ENCODE measurements at regions of chr21 and their contacts with region 1.

Region 1: DNA sequence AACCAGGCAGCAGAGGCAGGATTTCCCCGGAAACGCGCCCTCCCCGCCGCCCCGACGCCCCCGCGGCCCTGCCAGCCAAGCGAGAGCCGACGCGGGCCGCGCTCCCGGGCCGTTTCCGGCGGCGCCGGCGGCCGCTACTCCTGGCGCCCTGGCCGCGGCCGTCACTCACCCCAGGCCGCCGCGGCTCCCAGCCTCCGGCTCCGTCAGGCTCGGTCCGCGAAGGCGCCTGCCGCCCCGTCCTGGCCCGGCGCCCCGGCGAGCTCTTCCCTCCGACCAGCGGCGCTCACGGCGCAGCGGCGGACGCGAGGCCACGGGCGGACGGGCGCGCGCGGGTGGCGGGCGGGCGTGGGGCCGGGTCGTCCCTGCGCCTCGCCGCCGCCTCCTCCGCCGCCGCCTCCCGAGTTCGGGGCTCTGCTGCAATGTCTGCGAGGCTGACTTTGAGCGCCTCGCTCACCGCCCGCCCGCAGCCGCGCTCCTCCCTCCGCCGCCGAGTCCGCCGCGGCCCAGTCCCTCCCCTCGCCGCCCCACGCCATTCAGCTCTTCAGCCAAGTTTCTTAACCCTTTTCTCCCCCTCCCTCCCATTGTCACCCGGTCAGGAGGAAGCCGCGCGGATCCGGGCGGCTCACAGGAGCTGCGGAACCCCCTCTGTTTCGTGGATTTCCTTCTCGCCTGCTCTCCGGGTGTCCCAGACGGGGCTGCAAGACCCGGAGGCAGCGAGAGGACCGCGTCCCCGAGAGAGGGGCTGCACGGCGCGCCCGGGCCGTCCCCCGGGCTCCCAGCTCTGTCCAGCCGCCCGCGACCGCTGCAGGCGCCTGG is at the start of gene NRIP1:
- DNase-seq: peak; percentile 79 to 86 (median 85)
- H3K4me3 ChIP-seq: peak within 1 kb of the TSS; percentile 66 to 72
- H3K4me3 Mint-ChIP-seq: peak within 1 kb of the TSS; percentile 92 to 97 (median 96)
- H3K27ac ChIP-seq: peak within 1 kb of the TSS; percentile 68
- H3K27ac Mint-ChIP-seq: peak within 1 kb of the TSS; percentile 95 to 99 (median 97)
- H3K4me1 ChIP-seq: peaks cover 27% of the 10 kb centered on the region
- H3K4me1 Mint-ChIP-seq: peaks cover 22 to 53% (median 38%) of the 10 kb centered on the region in 4 donors
- H3K27me3 ChIP-seq: no peaks in the 10 kb centered on the region
- H3K27me3 Mint-ChIP-seq: peaks cover 0 to 18% of the 10 kb centered on the region in 2 donors
- total RNA-seq, gene NRIP1: 22.8 to 24.5 TPM

Region 2: GRCh38 chr21:14403681-14404318 is 661.0 kb before region 1 on chr21:
- CTCF ChIA-PET with region 1: no interaction called
- POLR2A ChIA-PET with region 1: no interaction called
- intact Hi-C with region 1: loop called (anchors 5 kb)
- DNase-seq: peak in 4 of 5 donors; percentile 32 to 45 (median 38)
- H3K4me3 ChIP-seq: no peak overlapping the region
- H3K4me3 Mint-ChIP-seq: no peak overlapping the region
- H3K27ac ChIP-seq: no peak overlapping the region
- H3K27ac Mint-ChIP-seq: no peak overlapping the region
- H3K4me1 ChIP-seq: no peaks in the 10 kb centered on the region
- H3K4me1 Mint-ChIP-seq: peaks cover 0 to 1% (median 0%) of the 10 kb centered on the region in 4 donors
- H3K27me3 ChIP-seq: no peaks in the 10 kb centered on the region
- H3K27me3 Mint-ChIP-seq: peaks cover 0 to 3% of the 10 kb centered on the region in 2 donors

Region 3: DNA sequence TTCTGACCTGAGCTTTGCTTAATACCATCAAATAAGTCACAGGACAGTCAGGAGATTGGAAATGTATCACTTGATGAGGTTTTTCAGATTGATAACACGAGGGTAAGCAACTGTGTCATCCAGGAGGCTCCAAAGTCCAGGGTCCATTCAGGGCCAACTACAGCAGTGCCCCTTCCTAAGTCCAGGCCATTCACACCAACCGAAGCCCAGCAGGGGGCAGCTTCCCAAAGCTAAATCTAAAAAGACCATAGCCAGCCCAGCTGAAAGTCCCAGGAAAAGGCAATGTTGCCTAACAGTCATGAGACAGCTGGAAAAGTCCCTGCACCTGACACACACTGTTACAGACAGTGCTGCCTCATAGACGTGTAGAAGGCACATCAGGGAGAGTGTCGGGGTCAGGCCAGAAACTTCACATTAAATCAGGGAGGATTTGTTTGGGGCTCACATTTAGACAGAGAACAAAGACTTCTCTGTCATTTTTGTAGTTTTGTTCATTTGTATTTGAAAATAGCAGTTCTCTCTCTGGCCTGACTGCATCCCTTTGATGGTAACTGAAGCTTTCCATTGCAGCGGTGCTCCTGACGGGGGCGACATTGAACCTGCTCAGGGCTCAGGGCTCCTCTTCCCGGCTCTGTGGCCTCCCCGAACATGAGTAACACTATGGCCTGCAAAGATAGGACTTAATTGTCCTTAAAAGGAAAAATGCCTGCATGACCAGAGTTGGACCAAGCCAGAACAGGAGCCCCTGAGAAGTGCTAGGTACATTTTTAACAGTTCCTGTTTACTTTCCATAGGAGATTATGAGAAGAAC is 200.4 kb before region 1 on chr21:
- CTCF ChIA-PET with region 1: no interaction called
- POLR2A ChIA-PET with region 1: no interaction called
- intact Hi-C with region 1: no loop called
- DNase-seq: peak in 2 of 5 donors; percentile 3 to 4
- H3K4me3 ChIP-seq: no peak overlapping the region
- H3K4me3 Mint-ChIP-seq: no peak overlapping the region
- H3K27ac ChIP-seq: no peak overlapping the region
- H3K27ac Mint-ChIP-seq: no peak overlapping the region
- H3K4me1 ChIP-seq: no peaks in the 10 kb centered on the region
- H3K4me1 Mint-ChIP-seq: peaks cover 0 to 1% (median 0%) of the 10 kb centered on the region in 4 donors
- H3K27me3 ChIP-seq: no peaks in the 10 kb centered on the region
- H3K27me3 Mint-ChIP-seq: no peaks in the 10 kb centered on the region

Region 4: GRCh38 chr21:15005391-15005790 is 59.4 kb before region 1 on chr21:
- CTCF ChIA-PET with region 1: no interaction called
- POLR2A ChIA-PET with region 1: interaction called, 8 read pairs
- intact Hi-C with region 1: loop called (anchors 5 kb)
- DNase-seq: peak in 3 of 5 donors; percentile 5 to 11 (median 10)
- H3K4me3 ChIP-seq: no peak overlapping the region
- H3K4me3 Mint-ChIP-seq: peak overlapping the region; percentile 29 to 75 (median 65)
- H3K27ac ChIP-seq: no peak overlapping the region
- H3K27ac Mint-ChIP-seq: peak overlapping the region in 3 of 7 donors; percentile 42 to 80 (median 44)
- H3K4me1 ChIP-seq: peaks cover 13% of the 10 kb centered on the region
- H3K4me1 Mint-ChIP-seq: peaks cover 14 to 47% (median 36%) of the 10 kb centered on the region in 4 donors
- H3K27me3 ChIP-seq: no peaks in the 10 kb centered on the region
- H3K27me3 Mint-ChIP-seq: no peaks in the 10 kb centered on the region

Region 5: DNA sequence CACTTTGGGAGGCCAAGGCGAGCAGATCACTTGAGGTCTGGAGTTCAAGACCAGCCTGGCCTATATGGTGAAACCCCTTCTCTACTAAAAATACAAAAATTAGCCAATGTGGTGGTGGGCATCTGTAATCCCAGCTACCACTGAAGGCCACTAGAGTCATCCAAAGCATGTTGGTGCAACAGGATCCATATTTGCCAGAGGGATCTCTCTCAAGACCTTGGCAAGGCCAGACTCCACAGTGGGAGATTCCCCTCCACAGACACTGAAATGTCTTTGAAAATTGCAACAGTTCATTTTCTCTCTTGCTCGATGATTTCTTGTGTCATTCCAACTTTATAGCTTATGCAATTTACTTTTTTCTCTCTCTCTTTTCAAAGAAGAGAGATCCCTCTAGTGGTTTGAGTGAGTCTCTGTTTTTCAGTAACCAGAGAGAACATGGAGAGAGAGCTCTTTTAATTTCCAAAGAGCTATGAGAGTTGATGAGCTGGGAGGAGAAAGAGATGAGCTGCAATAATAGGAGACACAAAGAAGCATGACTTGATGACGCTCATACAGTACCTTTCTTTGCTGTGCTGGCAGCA is 488.2 kb after region 1 on chr21:
- CTCF ChIA-PET with region 1: interaction called, 4 read pairs
- POLR2A ChIA-PET with region 1: no interaction called
- intact Hi-C with region 1: loop called (anchors 1 kb)
- DNase-seq: peak in 4 of 5 donors; percentile 21 to 38 (median 34)
- H3K4me3 ChIP-seq: no peak overlapping the region
- H3K4me3 Mint-ChIP-seq: peak overlapping the region in 1 of 8 donors; percentile 21
- H3K27ac ChIP-seq: no peak overlapping the region
- H3K27ac Mint-ChIP-seq: no peak overlapping the region
- H3K4me1 ChIP-seq: peaks cover 11% of the 10 kb centered on the region
- H3K4me1 Mint-ChIP-seq: peaks cover 9 to 10% (median 10%) of the 10 kb centered on the region in 4 donors
- H3K27me3 ChIP-seq: no peaks in the 10 kb centered on the region
- H3K27me3 Mint-ChIP-seq: peaks cover 0 to 4% of the 10 kb centered on the region in 2 donors

Region 6: DNA sequence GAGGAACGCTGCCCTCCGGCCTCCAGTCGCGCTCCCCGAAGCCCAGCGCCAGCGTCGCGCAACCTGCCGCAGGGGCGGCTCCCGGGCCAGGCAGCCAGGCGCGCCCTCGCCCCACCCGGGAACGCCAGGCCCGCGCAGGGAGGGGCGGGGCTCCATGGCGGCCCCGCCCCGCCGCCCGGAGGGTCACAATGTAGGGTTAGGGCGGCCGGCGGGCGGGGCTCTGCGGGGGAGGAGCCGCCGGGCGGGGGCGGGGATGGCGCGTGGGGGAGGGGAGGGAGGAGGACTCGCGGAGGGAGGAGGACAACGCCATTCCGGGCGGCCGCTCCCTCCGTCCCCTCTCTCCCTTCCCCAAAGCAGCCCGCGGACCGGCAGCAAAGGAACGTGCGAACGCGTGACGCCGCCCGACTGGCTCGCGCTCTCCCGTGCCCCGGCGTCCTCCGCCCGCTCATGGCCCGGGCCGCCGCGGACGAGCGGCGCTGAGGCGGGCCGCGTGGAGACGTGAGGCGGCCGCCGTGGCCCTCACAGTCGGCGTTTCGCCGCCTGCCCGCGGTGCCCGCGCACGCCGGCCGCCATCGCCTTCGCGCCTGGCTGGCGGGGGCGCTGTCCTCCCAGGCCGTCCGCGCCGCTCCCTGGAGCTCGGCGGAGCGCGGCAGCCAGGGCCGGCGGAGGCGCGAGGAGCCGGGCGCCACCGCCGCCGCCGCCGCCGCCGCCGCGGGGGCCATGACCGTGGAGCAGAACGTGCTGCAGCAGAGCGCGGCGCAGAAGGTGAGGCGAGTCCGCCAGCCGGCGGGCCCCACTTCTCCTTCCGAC is 665.1 kb after region 1 on chr21 and contains the start of gene USP25:
- CTCF ChIA-PET with region 1: no interaction called
- POLR2A ChIA-PET with region 1: interaction called, 4 read pairs
- intact Hi-C with region 1: loop called (anchors 2 kb)
- DNase-seq: peak; percentile 83 to 86 (median 84)
- H3K4me3 ChIP-seq: peak within 1 kb of the TSS; percentile 47 to 65
- H3K4me3 Mint-ChIP-seq: peak within 1 kb of the TSS; percentile 82 to 98 (median 94)
- H3K27ac ChIP-seq: peak within 1 kb of the TSS; percentile 65
- H3K27ac Mint-ChIP-seq: peak within 1 kb of the TSS; percentile 83 to 96 (median 95)
- H3K4me1 ChIP-seq: peaks cover 38% of the 10 kb centered on the region
- H3K4me1 Mint-ChIP-seq: peaks cover 17 to 43% (median 29%) of the 10 kb centered on the region in 4 donors
- H3K27me3 ChIP-seq: no peaks in the 10 kb centered on the region
- H3K27me3 Mint-ChIP-seq: no peaks in the 10 kb centered on the region
- total RNA-seq, gene USP25: 72.7 to 73.5 TPM

Measured in CD4-positive, alpha-beta memory T cell (primary cell).